Spleen (tissue), 13 donors: ENCODE measurements at regions of chr9 and their contacts with region 1.

Region 1: DNA sequence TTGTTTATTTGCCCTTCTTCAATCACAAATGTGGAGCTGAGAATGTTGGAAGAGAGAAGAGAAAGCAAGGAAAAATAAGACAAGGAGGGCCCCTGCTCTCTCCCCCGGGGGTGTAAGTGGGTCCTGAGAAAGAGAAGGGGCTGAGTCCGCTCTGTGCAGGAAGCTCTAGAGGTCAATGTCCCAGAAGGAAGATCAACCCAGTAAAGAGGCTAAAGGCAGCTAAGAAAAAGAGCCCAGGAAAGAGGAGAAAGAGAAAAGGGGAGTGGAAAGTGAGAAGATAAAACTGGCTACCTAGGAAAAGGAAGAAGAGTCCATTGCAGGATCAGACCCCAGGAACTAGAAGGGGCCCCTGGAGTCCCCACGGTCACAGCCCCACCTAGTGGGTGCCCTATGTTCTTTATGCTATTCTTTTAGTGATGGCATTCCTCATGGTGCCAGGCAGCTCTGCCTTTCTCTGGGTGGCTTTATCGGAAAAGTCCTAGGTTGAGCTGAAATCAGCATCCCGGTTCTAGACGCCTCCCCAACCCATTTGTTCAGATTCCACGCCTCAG is 583.4 kb downstream of the ACTL7B start:
- DNase-seq: no peak
- H3K4me3 ChIP-seq: peak overlapping the region in 1 of 8 donors; percentile 27
- H3K27ac ChIP-seq: peak overlapping the region in 7 of 8 donors; percentile 37 to 80 (median 64)
- H3K4me1 ChIP-seq: peaks cover 0 to 16% (median 11%) of the 10 kb centered on the region in 6 donors
- H3K27me3 ChIP-seq: no peaks in the 10 kb centered on the region
- CTCF ChIP-seq: peak; percentile 12 to 69 (median 49)
- POLR2A ChIP-seq: no peak

Region 2: GRCh38 chr9:107489687-107490605 is 782.5 kb before region 1 on chr9 and contains the start of gene KLF4:
- intact Hi-C with region 1: loop called (anchors 10 kb)
- DNase-seq: peak; percentile 93
- H3K4me3 ChIP-seq: peak within 1 kb of the TSS; percentile 49 to 79 (median 57)
- H3K27ac ChIP-seq: peak within 1 kb of the TSS; percentile 74 to 95 (median 90)
- H3K4me1 ChIP-seq: peaks cover 7 to 59% (median 37%) of the 10 kb centered on the region in 6 donors
- H3K27me3 ChIP-seq: peaks cover 0 to 71% (median 37%) of the 10 kb centered on the region in 7 donors
- CTCF ChIP-seq: no peak
- POLR2A ChIP-seq: peak in 1 of 3 donors; percentile 74
- total RNA-seq, gene KLF4: 63.8 to 177 (median 88.8) TPM

Region 3: DNA sequence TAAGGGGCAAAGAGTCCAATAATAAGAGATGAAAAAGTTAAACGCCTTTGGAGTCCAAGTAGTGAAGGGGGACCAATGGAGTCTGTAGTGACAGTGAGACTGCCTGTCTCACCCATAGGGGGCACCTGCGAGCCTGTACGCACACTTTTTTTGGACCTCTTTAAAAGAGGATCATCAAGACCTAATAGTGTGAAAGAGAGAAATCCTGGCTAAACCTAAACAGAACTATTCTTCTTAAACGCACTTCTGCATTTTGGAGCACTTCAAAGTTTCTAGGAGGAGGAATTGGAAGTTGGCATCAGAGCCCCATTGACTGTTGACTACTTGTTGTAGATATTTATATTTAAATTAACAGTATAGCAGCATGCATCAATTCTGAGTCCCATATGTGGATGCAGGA is 146.8 kb before region 1 on chr9:
- intact Hi-C with region 1: no loop called
- DNase-seq: no peak
- H3K4me3 ChIP-seq: no peak overlapping the region
- H3K27ac ChIP-seq: no peak overlapping the region
- H3K4me1 ChIP-seq: peaks cover 0 to 3% (median 0%) of the 10 kb centered on the region in 6 donors
- H3K27me3 ChIP-seq: no peaks in the 10 kb centered on the region
- CTCF ChIP-seq: peak in 2 of 11 experiments; percentile 12 to 14
- POLR2A ChIP-seq: no peak